Activated CD4-positive, alpha-beta T cell treated with anti-CD3 and anti-CD28 coated beads, Interleukin-2, amount 10 ng/mL, durations not matched to agents 24 days and 14 days (primary cell): ENCODE measurements at regions of chr22 and their contacts with region 1.

Region 1: DNA sequence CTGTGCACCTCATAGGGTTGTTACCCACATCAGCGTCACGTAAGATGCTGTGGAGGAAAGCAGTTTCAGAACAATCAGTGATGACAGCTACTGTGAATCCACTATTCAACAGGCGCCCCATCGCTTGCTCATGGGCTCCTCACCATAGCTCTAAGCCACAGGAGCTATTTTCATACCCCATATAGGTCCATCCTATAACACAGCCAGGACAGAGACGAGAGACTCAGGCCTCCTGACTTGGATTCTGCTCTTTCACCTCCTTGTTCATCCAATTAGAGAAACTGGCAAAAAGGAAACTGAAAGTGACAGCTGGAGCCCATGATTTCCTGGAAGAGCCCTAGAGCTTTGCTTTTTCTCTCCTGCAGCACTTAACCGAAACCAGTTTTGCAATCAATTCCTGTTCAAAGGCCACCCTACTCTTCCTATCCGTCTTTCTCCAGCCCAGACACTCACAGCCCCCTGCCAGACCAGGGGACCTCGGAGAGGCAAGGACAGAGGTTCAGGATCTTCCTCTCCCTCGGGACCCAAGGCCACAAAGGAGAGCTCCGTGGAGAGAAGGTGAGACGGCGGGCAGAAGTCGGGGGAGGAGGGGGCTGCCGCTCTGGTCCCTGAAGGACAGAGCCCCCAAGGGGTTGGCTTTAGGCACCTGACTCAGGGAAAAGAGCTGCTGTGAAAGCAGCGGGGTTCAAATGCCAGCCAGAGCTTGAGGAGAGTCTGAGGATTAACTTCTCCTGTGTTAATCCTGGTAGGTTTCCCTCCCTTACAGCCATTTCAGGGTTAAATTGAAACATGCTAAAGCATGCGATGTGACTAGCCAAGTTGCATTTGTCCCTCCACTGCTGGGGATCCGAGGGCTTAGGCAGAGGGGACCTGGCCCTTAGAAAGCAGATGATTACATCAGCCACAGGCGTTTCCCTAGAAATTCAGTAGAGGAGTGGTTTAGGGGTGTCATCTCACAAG is at the start of gene APOL6:
- DNase-seq: peak; percentile 93
- H3K4me3 Mint-ChIP-seq: peak within 1 kb of the TSS; percentile 100
- H3K27ac Mint-ChIP-seq: peak within 1 kb of the TSS; percentile 100
- H3K4me1 Mint-ChIP-seq: peaks cover 32% of the 10 kb centered on the region
- H3K27me3 Mint-ChIP-seq: no peaks in the 10 kb centered on the region
- total RNA-seq, gene APOL6: 21.5 and 22.4 TPM in 2 replicates

Region 2: GRCh38 chr22:35299673-35300497 is 348.5 kb before region 1 on chr22 and contains the start of gene TOM1:
- intact Hi-C with region 1: loop called (anchors 2 kb)
- DNase-seq: peak; percentile 99
- H3K4me3 Mint-ChIP-seq: peak within 1 kb of the TSS; percentile 96
- H3K27ac Mint-ChIP-seq: peak within 1 kb of the TSS; percentile 94
- H3K4me1 Mint-ChIP-seq: peaks cover 33% of the 10 kb centered on the region
- H3K27me3 Mint-ChIP-seq: peaks cover 2% of the 10 kb centered on the region
- total RNA-seq, gene TOM1: 16.8 and 18.7 TPM in 2 replicates

Region 3: DNA sequence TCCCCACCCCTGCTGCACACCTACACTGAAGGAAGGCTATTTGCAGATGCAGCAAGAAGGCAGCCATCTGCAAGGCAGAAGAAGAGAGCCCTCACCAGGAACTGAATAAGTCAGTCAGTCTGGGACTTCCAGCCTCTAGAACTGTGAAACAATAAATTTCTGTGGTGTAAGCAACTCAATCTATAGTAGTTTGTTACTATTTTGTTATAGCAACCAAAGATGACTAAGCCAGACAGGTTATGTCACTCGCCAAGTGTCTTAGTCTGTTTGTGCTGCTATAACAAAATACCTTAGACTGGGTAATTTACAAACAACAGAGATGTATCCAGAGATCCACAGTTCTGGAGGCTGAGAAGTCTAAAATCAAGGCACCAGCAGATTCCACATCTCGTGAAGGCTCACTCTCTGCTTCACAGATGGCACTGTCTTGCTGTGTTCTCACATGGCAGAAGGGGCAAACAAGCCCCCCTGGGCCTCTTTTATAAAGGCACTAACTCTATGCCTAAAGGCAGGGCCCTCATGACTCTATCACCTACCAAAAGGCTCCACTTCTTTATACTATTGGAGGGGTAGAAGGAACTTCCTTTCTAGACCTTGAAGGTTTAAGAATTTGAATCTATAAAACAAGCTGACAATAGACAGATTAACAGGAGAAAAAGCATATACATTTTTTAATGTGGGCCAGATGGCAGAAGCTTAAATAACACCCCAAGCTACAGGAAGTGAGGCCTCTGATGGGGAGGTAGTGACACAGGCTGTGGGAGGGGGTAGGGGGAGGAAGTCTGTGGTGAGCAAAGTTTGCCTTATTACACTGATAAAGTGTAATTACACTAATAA is 12.2 kb after region 1 on chr22:
- intact Hi-C with region 1: loop called (anchors 1 kb)
- DNase-seq: peak; percentile 75
- H3K4me3 Mint-ChIP-seq: peak overlapping the region; percentile 64
- H3K27ac Mint-ChIP-seq: peak overlapping the region; percentile 88
- H3K4me1 Mint-ChIP-seq: peaks cover 53% of the 10 kb centered on the region
- H3K27me3 Mint-ChIP-seq: no peaks in the 10 kb centered on the region

Region 4: GRCh38 chr22:35678836-35679235 is 30.5 kb after region 1 on chr22:
- intact Hi-C with region 1: loop called (anchors 1 kb)
- DNase-seq: no peak
- H3K4me3 Mint-ChIP-seq: no peak overlapping the region
- H3K27ac Mint-ChIP-seq: peak overlapping the region; percentile 31
- H3K4me1 Mint-ChIP-seq: peaks cover 15% of the 10 kb centered on the region
- H3K27me3 Mint-ChIP-seq: peaks cover 3% of the 10 kb centered on the region

Region 5: DNA sequence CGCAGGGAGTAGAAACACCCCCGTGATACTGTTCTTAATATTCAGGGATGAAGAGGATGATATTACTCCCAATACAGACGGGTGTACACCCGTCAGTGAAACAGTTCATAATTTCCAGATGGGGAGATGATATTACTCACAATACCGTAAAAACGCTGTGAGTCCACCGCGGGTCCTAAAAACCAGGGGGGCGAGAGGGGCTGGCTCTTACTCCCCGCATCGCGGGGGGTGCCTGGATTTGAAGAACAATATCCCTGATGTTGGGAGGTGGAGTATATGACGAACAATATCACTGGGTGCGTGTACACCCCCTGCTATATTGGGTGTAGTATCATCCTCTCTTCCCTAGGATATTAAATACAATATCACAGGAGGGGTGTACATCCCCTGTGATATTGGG is 48.8 kb after region 1 on chr22:
- intact Hi-C with region 1: loop called (anchors 2 kb)
- DNase-seq: peak; percentile 88
- H3K4me3 Mint-ChIP-seq: no peak overlapping the region
- H3K27ac Mint-ChIP-seq: no peak overlapping the region
- H3K4me1 Mint-ChIP-seq: no peaks in the 10 kb centered on the region
- H3K27me3 Mint-ChIP-seq: no peaks in the 10 kb centered on the region

Region 6: DNA sequence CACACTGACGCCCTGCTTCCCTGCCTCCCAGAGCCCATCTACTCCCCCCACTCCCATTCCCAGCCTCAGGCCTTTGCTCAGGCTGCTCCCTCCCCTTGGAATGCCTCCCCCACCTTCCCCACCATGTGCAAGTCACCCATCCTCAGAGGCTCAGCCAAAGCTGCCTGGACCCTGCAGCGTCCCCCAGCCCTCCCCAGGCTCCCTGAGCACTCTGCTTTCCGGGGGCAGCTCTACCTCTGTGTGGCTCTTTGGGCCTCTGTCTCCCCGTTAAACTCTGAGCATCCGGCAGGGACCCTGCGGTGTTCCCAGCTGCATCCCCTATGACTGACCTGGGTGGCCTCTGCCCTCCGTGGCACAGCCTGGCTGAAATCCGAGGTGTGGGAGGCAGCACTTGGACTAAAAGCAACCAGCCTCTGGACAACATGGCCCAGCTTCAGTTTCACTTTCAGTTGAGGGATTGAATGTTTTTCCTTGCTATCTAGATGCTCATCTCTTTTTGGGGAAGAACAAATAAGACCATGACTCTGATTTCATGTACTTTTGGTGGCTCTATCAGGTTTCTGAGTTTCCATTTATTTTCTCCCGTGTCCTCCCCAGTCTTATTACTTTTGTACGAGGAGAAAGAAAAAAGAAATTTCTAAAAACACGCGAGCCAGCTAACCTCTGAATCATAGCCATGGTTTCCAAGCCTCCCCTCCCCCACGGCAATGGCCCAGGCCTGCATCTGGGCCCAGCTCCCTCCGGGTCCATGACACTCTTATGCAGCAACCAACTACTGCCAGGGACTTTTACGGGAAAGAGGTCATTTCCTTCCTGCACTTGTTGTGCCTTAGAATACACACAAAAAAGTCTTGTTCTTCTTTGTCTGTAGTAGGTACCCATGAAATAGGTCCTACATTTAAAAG is 508.4 kb after region 1 on chr22:
- intact Hi-C with region 1: loop called (anchors 10 kb)
- DNase-seq: peak; percentile 86
- H3K4me3 Mint-ChIP-seq: peak overlapping the region; percentile 94
- H3K27ac Mint-ChIP-seq: peak overlapping the region; percentile 99
- H3K4me1 Mint-ChIP-seq: peaks cover 81% of the 10 kb centered on the region
- H3K27me3 Mint-ChIP-seq: no peaks in the 10 kb centered on the region